ENCODE measurements at regions of chr19 and their contacts with region 1.

Region 1: GRCh38 chr19:506404-507285 is 652 bp upstream of the TPGS1 start:
- H3K4me3 ChIP-seq: peak overlapping the region; percentile 72
- H3K27ac ChIP-seq: peak overlapping the region; percentile 93
- H3K4me1 ChIP-seq: peaks cover 7% of the 10 kb centered on the region; the same call in 1 of the 2 replicates
- CTCF ChIP-seq: peak; percentile 99

Region 2: DNA sequence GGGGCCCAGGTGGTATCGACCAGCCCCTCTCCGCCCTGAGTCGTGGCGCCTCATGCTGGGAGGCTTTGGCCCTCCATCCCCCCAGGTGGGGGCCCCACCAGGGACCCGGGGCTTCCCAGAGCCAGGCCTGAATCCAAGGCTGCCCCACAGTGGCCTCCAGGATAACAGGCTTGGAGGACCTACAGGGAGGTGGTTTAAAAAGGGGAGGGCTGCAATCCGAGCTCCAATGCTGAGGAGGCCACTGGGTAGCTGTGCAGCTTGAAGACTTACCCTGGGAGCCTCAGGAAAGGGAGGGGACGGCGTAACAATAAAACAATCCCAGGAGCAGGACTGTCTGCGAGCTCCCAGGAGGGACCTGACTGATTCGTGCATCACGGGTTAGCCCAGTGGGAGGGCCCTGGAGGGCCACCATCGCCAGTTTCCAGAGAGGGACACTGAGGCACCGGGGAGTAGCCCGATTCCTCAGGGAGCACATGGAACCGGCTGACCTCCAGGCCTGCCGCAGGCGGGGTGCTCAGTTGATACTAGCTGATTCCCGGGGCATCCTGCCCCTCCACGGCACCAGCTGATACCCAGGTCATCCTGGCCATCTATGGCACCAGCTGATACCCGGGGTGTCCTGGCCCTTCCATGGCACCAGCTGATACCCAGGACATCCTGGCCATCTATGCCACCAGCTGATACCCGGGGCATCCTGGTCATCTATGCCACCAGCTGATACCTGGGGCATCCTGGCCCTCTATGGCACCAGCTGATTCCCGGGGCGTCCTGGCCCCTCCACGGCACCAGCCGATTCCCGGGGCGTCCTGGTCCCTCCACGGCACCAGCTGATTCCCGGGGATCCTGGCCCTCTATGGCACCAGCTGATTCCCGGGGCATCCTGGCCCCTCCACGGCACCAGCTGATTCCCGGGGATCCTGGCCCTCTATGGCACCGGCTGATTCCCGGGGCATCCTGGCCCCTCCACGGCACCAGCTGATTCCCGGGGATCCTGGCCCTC is 94.0 kb before region 1 on chr19:
- CTCF ChIA-PET with region 1: interaction called, 10 read pairs
- POLR2A ChIA-PET with region 1: no interaction called
- H3K4me3 ChIP-seq: no peak overlapping the region
- H3K27ac ChIP-seq: no peak overlapping the region
- H3K4me1 ChIP-seq: peaks cover 3% of the 10 kb centered on the region; the same call in 1 of the 2 replicates
- CTCF ChIP-seq: peak; percentile 30; the same call in 1 of the 2 replicates

Region 3: GRCh38 chr19:461664-462551 is 44.7 kb before region 1 on chr19:
- CTCF ChIA-PET with region 1: interaction called, 10 read pairs
- POLR2A ChIA-PET with region 1: interaction called, 7 read pairs
- H3K4me3 ChIP-seq: peak overlapping the region; percentile 44
- H3K27ac ChIP-seq: peak overlapping the region; percentile 42; the same call in 1 of the 2 replicates
- H3K4me1 ChIP-seq: no peaks in the 10 kb centered on the region
- CTCF ChIP-seq: no peak

Region 4: DNA sequence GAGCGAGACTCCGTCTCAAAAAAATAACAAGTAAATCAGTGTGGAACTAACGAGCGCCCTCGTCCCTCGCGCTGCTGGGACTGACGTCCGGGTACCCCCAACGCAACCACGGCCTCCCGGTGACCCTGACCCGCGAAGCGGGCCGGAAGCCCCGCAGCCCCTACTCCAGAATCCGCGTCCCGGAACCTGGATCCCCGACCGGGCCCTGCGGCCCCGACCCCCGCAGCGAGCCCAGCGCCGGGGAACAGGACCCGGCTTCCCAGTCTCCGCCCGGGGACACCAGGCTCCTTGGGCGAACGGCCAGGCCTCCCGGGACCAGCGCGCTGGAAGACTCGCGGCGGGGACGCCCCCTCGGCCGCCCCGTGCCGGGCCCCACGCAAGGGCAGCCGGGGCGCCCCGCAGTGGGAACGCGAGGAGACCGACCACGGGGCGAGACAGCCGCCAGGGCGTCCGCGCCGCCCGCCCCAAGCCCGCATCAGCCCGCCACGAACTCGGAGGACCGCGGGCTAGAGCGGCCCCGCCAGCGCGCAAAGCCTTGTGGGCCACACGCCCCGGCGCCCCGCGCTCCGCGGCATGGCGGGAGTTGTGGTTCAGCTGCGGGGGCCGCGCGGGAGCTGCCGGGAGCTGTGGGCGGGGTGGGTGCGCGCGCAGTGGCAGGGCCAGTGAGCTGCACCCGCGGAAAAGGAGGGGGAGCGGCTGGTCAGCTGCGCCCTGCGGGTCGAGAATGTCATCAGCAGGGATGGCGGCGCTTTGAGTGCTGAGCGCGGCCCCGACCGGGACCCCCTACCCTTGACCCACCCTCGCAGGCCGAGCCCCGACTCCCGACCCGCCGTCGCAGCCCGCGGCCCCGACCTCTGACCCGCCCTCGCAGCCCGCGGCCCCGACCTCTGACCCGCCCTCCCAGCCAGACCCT is 17.9 kb before region 1 on chr19:
- CTCF ChIA-PET with region 1: interaction called, 16 read pairs
- POLR2A ChIA-PET with region 1: interaction called, 33 read pairs
- H3K4me3 ChIP-seq: peak overlapping the region; percentile 73
- H3K27ac ChIP-seq: peak overlapping the region; percentile 92
- H3K4me1 ChIP-seq: no peaks in the 10 kb centered on the region
- CTCF ChIP-seq: peak; percentile 27; the same call in 1 of the 2 replicates

Region 5: GRCh38 chr19:495402-496186 is 11.1 kb before region 1 on chr19:
- CTCF ChIA-PET with region 1: interaction called, 12 read pairs
- POLR2A ChIA-PET with region 1: interaction called, 7 read pairs
- H3K4me3 ChIP-seq: no peak overlapping the region
- H3K27ac ChIP-seq: no peak overlapping the region
- H3K4me1 ChIP-seq: no peaks in the 10 kb centered on the region
- CTCF ChIP-seq: peak; percentile 77

Region 6: DNA sequence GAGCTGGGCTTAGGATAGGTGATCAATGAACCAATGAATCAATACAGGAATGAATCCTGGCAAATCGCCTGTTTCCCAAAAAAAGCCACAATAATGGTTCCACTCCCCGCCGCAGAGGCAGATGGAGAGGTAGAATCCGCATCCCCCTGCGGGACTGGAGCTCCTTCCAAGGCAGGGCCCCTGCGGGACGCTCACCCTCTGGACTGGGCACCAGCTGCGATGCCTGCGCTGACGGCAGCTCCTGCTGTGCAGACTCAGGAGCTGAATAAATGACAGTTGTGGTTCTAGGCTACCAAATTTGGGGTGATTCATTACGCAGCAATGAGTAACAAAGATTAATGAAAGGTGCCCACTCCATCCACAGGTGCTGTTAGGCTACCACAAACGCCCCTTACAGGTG is 16.1 kb after region 1 on chr19:
- CTCF ChIA-PET with region 1: interaction called, 49 read pairs
- POLR2A ChIA-PET with region 1: interaction called, 8 read pairs
- H3K4me3 ChIP-seq: no peak overlapping the region
- H3K27ac ChIP-seq: no peak overlapping the region
- H3K4me1 ChIP-seq: no peaks in the 10 kb centered on the region
- CTCF ChIP-seq: no peak

Region 7: GRCh38 chr19:531009-531752 is 24.5 kb after region 1 on chr19:
- CTCF ChIA-PET with region 1: interaction called, 49 read pairs
- POLR2A ChIA-PET with region 1: interaction called, 35 read pairs
- H3K4me3 ChIP-seq: peak overlapping the region; percentile 89
- H3K27ac ChIP-seq: peak overlapping the region; percentile 96
- H3K4me1 ChIP-seq: peaks cover 7% of the 10 kb centered on the region
- CTCF ChIP-seq: peak; percentile 27; the same call in 1 of the 2 replicates